ENCODE measurements at regions of chrX and their contacts with region 1.

Region 1: GRCh38 chrX:86724277-86724676 is 576.0 kb downstream of the DACH2 start:
- DNase-seq: no peak
- H3K4me3 ChIP-seq: no peak overlapping the region
- H3K27ac ChIP-seq: no peak overlapping the region
- H3K4me1 ChIP-seq: no peaks in the 10 kb centered on the region
- H3K27me3 ChIP-seq: no peaks in the 10 kb centered on the region
- CTCF ChIP-seq: no peak
- EP300 ChIP-seq: no peak
- POLR2A ChIP-seq: no peak

Region 2: GRCh38 chrX:86133761-86134160 is 590.5 kb before region 1 on chrX:
- intact Hi-C with region 1: loop called in 1 of 4 experiments (anchors 10 kb)
- DNase-seq: no peak
- H3K4me3 ChIP-seq: no peak overlapping the region
- H3K27ac ChIP-seq: no peak overlapping the region
- H3K4me1 ChIP-seq: no peaks in the 10 kb centered on the region
- H3K27me3 ChIP-seq: no peaks in the 10 kb centered on the region
- CTCF ChIP-seq: no peak
- EP300 ChIP-seq: no peak
- POLR2A ChIP-seq: no peak

Region 3: GRCh38 chrX:86421771-86422170 is 302.5 kb before region 1 on chrX:
- intact Hi-C with region 1: no loop called
- DNase-seq: no peak
- H3K4me3 ChIP-seq: no peak overlapping the region
- H3K27ac ChIP-seq: no peak overlapping the region
- H3K4me1 ChIP-seq: no peaks in the 10 kb centered on the region
- H3K27me3 ChIP-seq: no peaks in the 10 kb centered on the region
- CTCF ChIP-seq: no peak
- EP300 ChIP-seq: no peak
- POLR2A ChIP-seq: no peak

Measured in ovary (tissue), 10 donors.